Ascending aorta (tissue), 2 donors: ENCODE measurements at regions of chr2 and their contacts with region 1.

Region 1: DNA sequence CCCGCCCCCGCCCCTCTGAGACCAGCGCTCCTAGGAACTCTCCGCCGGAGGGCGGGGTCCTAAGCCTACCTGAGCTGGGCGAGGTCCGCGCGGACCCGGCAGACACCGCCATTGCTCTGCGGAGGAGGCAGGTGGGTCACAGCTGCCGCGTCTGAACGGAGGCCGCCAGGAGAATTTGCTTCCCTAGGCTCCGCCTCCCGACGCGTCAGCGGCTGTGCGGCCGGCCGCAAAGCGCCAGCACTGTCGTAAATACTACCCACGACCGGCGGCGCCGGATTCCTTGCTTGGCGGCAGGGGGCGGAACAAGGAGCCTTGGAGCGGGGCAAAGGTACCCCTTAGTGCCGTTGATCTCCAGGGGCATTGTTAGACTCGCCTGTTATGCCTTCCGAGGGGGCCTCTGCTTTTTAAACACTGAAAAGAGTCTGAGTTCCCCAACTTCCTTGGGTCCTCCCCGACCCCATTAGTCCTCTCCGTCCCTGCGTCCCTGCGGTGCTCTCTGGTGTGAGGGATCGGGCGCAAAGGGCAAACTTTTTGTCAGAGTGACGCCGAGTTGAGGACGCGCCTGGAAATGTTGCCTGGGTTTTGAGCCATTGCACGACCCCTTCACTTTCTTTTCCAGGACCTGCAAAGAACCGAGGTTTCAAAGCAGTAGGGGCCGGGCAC is at the start of gene GGCX:
- DNase-seq: peak; percentile 82 to 97
- H3K4me3 ChIP-seq: peak within 1 kb of the TSS; percentile 77 to 79
- H3K27ac ChIP-seq: peak within 1 kb of the TSS; percentile 76 to 86
- H3K4me1 ChIP-seq: peaks cover 3 to 16% of the 10 kb centered on the region in 2 donors
- H3K27me3 ChIP-seq: no peaks in the 10 kb centered on the region
- CTCF ChIP-seq: peak in 2 of 3 experiments; percentile 10 to 35
- total RNA-seq, gene GGCX: 31.9 TPM

Region 2: DNA sequence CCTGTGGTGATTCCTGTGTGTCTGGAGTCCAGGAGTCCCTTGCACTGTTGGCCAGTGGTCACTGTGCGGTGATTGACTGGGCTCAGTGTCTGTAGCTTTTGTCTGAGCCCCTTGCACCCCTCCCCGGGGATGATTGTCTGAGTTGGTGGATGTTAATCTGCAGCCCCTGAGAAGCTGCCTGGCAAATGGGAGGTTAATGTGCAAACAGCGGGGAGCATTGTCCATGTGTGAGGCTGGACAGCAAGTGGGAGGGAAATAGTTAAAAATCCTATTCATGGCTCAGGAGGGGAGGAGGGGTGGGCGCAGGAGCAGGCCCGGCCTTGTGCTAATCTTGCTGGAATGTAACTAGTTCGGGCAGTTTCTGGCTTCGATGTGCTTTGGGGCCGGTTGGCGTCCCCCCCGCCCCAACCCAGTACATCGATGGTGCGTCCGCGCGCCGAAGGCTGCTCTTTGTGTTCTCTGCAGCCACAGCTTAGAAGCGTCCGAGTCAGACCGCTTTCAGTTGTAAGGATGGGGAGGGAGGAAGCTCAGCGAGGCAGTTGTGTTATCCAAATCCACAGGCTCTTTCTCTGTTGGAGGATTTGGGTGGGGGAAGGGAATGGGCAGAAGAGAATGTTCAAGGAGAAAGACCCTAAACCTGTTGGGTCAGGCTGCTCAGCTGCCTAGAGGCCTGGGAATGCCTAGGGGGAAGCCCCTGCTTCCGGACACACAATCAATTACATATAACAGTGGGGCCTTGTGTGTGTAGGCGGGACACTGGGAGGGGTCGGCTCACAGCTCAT is 305.4 kb before region 1 on chr2:
- intact Hi-C with region 1: no loop called
- DNase-seq: peak in 1 of 2 donors; percentile 76
- H3K4me3 ChIP-seq: peak overlapping the region in 1 of 2 donors; percentile 44
- H3K27ac ChIP-seq: peak overlapping the region; percentile 62 to 81
- H3K4me1 ChIP-seq: peaks cover 24 to 56% of the 10 kb centered on the region in 2 donors
- H3K27me3 ChIP-seq: no peaks in the 10 kb centered on the region
- CTCF ChIP-seq: no peak

Region 3: DNA sequence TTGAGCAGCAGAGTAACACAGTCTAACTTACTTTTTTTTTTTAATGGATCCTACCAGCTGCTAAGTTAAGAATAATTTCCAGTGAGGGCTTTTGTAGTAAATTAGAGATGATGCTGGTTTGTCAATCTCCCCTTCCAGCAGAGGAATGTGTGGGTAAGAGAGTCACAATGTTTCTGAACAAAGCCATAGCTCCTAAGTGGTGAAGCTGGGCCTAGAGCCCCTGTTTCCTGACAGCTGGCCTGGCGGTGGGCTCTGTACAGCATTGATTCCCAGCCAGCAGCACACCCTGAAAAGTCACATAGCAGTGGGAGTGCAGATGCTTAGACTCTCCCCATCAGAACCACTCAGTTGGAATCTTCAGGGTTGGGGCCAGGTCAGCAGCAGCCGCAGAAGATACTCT is 175.7 kb before region 1 on chr2:
- intact Hi-C with region 1: no loop called
- DNase-seq: no peak
- H3K4me3 ChIP-seq: no peak overlapping the region
- H3K27ac ChIP-seq: no peak overlapping the region
- H3K4me1 ChIP-seq: no peaks in the 10 kb centered on the region
- H3K27me3 ChIP-seq: no peaks in the 10 kb centered on the region
- CTCF ChIP-seq: no peak

Region 4: DNA sequence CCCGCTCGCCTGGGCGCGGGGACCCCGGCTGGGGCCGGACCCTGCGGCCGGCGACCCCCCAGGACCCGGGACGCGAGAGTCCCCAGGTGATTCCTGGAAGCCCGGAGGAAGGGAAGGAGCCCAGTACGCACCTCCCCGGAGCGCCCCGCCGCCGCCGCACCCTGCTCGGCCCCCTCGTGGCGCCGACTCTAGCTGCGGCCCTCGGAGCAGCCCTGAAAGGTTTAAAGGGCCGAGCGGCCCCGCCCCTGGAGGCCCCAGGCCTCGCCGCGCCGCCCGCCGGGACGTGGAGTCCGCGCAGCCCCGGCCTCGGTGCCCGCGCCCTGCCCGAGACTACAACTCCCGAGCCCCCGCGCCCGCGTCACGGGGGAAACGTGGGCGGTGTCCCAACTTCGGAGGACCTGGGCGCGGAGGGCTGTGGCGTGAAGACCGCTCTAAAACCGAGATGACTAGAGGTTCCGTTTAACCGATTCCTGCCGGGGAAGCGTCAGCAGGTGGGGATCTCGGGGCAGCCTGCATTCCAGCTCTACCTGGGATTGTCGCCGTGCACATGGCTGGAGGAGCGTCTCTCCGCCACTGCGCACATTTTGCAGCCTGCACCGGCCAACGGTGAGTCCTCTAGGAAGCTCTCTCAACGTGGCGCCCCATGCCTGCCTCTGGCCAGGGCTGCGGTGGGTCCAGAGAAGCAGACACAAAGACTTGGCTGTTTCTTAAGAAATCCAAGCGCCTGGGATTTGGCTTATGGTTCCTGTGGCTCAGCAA is 41.2 kb after region 1 on chr2 and contains the start of gene TMEM150A:
- intact Hi-C with region 1: loop called (anchors 1 kb)
- DNase-seq: peak; percentile 89 to 97
- H3K4me3 ChIP-seq: peak within 1 kb of the TSS; percentile 86 to 87
- H3K27ac ChIP-seq: peak within 1 kb of the TSS; percentile 73 to 88
- H3K4me1 ChIP-seq: peaks cover 10 to 39% of the 10 kb centered on the region in 2 donors
- H3K27me3 ChIP-seq: no peaks in the 10 kb centered on the region
- CTCF ChIP-seq: peak; percentile 15 to 82 (median 36)
- total RNA-seq, gene TMEM150A: 26.7 TPM